Heart right ventricle (tissue), 16 donors: ENCODE measurements at regions of chr11 and their contacts with region 1.

Region 1: DNA sequence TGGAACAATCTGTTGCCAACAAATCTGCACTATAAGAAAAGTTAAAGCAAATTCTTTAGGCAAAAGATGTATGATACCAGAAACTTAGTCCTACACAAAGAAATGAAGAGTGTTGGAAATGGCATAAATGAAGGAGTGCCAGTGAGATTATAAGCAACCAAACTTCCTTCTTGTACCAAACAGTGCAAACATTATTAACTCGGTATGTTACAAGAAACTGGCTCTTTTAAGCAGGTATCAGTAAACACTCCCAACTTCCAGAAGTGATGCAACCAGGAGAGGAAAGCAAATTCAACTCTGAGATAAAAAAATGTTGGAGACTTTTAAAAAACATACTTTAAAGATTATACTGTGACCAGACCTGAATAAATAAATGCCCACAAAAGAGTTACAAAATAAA is 28.5 kb downstream of the COPB1 start:
- DNase-seq: no peak
- ATAC-seq: no peak
- H3K4me3 ChIP-seq: no peak overlapping the region
- H3K27ac ChIP-seq: no peak overlapping the region
- H3K4me1 ChIP-seq: peaks cover 0 to 15% (median 4%) of the 10 kb centered on the region in 9 donors
- H3K27me3 ChIP-seq: no peaks in the 10 kb centered on the region
- CTCF ChIP-seq: no peak

Region 2: GRCh38 chr11:14409891-14410290 is 61.2 kb before region 1 on chr11:
- intact Hi-C with region 1: no loop called
- DNase-seq: no peak
- ATAC-seq: no peak
- H3K4me3 ChIP-seq: no peak overlapping the region
- H3K27ac ChIP-seq: no peak overlapping the region
- H3K4me1 ChIP-seq: peaks cover 0 to 25% (median 7%) of the 10 kb centered on the region in 9 donors
- H3K27me3 ChIP-seq: no peaks in the 10 kb centered on the region
- CTCF ChIP-seq: no peak

Region 3: DNA sequence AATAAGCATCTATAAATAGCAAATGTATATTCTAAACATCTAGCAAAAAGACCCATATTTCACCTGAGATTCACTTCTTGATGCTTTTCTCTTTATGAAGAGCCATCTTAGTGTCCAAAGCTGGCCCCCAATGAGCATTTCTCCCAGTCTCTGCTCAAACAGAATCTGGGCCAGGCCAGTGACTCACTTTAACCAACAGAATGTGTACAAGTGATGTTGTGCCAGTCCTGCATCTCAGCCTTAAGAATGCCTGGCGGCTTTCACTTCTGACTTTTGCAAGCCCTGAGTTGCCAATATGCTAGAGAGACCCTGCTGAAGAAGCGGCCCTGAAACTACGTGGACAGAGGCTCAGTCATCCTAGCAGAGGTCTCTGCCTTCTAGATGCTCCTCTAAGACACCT is 35.4 kb after region 1 on chr11:
- intact Hi-C with region 1: loop called in 1 of 10 experiments (anchors 5 kb)
- DNase-seq: no peak
- ATAC-seq: no peak
- H3K4me3 ChIP-seq: no peak overlapping the region
- H3K27ac ChIP-seq: no peak overlapping the region
- H3K4me1 ChIP-seq: no peaks in the 10 kb centered on the region
- H3K27me3 ChIP-seq: no peaks in the 10 kb centered on the region
- CTCF ChIP-seq: no peak